PC-9 (cell line): ENCODE measurements at regions of chr13 and their contacts with region 1.

Region 1: DNA sequence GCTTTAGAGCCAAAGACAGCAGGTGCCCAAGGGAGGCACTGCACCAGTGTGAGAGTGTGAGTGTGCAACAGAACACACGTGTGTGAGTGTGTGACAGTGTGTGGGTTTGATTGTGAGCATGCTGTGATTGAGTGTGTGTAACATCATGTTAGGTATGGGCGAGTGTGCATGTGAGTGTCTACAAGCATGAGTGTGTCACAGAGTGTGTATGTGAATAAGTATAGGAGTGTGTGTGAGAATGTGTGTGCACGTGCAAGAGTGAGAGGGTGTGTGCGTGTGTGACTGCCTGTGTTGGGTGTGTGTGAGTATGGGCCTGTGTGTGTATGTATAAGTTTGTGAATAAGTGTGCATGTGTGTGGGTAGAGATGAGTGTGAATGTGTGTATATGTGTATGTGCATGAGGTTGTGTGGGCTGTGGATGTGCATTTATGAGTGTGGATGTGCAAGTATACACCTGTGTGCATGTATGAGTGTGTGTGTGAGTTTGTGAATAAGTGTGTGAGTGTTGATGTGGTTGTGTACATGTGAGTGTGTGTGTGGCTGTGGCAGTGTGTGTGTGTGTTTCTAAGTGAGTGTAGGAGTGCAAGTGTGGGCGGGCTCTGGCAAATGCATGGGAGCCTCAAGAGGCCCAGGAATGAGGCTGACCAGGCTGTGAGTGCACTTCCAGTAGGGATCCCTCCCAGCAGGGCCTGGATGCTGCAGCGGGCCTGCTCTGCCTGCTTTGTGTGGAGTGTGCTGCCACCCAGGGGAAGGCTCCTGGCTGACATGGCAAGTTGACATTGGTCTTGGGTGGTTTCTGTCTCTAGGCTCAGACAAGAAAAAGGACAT is 198.4 kb downstream of the COL4A1 start:
- DNase-seq: peak; percentile 86 to 88
- H3K4me3 ChIP-seq: no peak overlapping the region
- H3K27ac ChIP-seq: peak overlapping the region; percentile 8; the same call in 1 of the 2 replicates
- H3K4me1 ChIP-seq: peaks cover 24% of the 10 kb centered on the region
- H3K27me3 ChIP-seq: no peaks in the 10 kb centered on the region
- CTCF ChIP-seq: peak; percentile 95

Region 2: DNA sequence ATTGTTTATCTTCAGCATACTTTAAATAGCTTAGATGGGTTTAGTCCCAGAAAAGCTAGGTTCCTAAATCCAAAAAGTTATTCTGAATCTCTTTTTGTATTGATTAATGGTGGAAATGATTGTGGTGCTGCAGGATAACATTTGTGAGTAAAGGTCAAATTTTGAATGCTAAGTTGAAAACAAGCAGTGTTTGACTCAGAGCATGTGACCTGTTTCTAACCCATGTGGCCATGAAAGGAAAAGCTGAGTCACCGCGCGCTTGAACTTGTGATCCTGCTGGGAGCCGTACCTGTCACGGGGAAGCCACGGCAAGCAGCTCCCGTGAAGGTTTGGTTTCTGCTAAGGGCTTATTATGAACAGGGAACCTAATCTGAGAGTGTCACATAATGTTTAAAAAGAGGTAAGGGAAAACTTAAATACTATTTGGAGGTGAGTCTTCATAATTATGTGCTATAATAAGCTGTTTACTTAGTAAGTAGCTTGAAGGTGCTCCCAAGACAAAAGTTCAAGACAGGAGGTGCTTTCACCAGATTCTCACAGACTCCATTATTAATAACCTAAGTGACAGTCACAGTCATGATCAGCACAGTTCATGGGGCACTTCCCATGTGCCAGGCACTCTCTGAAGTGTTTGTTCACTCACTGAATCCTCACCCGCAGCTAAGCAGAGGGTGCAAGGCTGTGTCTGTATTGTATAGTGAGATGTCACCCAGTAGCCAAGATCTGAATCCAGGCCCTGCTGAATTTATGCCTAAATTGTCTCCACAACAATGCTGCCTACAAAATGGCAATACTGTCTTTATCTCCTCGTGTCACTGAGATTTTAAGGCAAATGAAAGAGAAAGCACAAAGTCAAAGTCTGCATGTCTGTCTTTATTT is 1192.7 kb before region 1 on chr13:
- CTCF ChIA-PET with region 1: interaction called, 3 read pairs
- POLR2A ChIA-PET with region 1: no interaction called
- intact Hi-C with region 1: loop called (anchors 1 kb)
- DNase-seq: peak; percentile 81 to 96
- H3K4me3 ChIP-seq: peak overlapping the region; percentile 47
- H3K27ac ChIP-seq: peak overlapping the region; percentile 96
- H3K4me1 ChIP-seq: peaks cover 56% of the 10 kb centered on the region
- H3K27me3 ChIP-seq: no peaks in the 10 kb centered on the region
- CTCF ChIP-seq: no peak

Region 3: DNA sequence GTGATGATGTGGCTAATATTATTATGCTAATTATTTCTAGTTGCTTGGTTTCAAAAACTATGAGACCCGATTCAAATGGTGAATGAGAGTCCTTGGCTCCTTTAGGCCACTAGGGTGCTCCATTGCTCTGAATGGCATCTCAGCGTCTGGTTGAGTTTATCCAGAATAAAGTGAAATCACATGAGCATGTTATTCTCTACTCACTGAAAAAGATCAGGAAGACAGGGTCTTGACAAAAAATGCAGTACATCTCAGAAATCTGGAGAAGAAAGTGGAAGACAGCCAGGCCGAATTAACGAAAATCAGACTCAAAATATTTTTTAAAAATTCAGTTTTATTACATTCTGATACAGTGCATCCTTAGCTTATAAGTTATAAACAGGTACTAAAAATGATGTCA is 962.9 kb before region 1 on chr13:
- CTCF ChIA-PET with region 1: no interaction called
- POLR2A ChIA-PET with region 1: no interaction called
- intact Hi-C with region 1: loop called (anchors 1 kb)
- DNase-seq: peak; percentile 37 to 64
- H3K4me3 ChIP-seq: no peak overlapping the region
- H3K27ac ChIP-seq: no peak overlapping the region
- H3K4me1 ChIP-seq: peaks cover 8% of the 10 kb centered on the region; the same call in 1 of the 2 replicates
- H3K27me3 ChIP-seq: no peaks in the 10 kb centered on the region
- CTCF ChIP-seq: peak; percentile 87

Region 4: DNA sequence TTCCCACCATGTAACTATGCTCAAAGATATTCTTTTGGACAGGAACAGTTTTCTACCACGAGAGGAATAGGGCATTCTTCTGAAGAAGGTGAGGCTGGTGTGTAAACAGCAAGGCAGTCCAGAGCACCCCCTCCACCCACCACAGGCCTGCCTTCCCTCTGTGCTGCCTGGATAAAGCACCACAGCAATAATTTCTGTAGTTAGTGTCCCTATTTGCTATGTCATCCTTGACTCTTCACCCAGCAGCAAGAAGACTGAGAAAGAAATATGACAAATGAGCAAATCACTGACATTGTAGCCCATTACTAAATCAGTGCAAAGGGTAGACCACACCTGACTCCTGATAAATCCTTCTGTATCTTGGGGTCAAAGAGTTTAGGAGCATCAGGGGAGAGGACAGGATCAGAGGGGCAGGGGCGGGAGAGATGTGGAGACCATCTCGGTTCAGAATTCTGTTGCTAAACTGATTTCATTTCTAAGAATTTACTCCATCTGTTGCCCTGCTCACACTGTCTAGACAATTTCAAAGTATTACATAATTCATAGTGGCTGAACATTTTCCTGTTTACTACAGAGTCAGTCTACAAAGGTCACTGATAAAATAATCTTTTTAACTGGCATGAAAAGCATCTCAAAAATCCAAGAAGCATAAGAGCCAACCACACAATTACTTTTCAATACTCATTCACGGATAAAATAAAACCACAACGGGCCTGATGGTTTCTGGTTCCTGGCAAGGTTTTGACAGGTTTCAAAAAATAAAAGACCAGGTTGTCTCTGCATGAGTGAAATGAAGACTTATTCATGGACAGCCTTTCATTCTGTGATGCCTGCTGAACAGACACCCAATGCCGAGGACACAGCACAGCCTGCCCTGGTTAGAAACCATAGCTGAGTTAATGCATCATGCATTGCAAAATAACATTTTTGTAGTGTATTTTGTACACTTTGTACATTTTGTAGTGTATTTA is 233.8 kb before region 1 on chr13:
- CTCF ChIA-PET with region 1: no interaction called
- POLR2A ChIA-PET with region 1: no interaction called
- intact Hi-C with region 1: loop called (anchors 1 kb)
- DNase-seq: peak; percentile 32 to 90
- H3K4me3 ChIP-seq: peak overlapping the region; percentile 4; the same call in 1 of the 2 replicates
- H3K27ac ChIP-seq: peak overlapping the region; percentile 84
- H3K4me1 ChIP-seq: peaks cover 76% of the 10 kb centered on the region
- H3K27me3 ChIP-seq: no peaks in the 10 kb centered on the region
- CTCF ChIP-seq: no peak

Region 5: GRCh38 chr13:110126391-110126961 is 17.9 kb after region 1 on chr13:
- CTCF ChIA-PET with region 1: interaction called, 17 read pairs
- POLR2A ChIA-PET with region 1: no interaction called
- intact Hi-C with region 1: no loop called
- DNase-seq: peak; percentile 81 to 99
- H3K4me3 ChIP-seq: peak overlapping the region; percentile 33; the same call in 1 of the 2 replicates
- H3K27ac ChIP-seq: peak overlapping the region; percentile 94
- H3K4me1 ChIP-seq: peaks cover 42% of the 10 kb centered on the region
- H3K27me3 ChIP-seq: no peaks in the 10 kb centered on the region
- CTCF ChIP-seq: no peak

Region 6: GRCh38 chr13:110209950-110210603 is 101.5 kb after region 1 on chr13:
- CTCF ChIA-PET with region 1: no interaction called
- POLR2A ChIA-PET with region 1: no interaction called
- intact Hi-C with region 1: no loop called
- DNase-seq: peak; percentile 78 to 81
- H3K4me3 ChIP-seq: no peak overlapping the region
- H3K27ac ChIP-seq: peak overlapping the region; percentile 72
- H3K4me1 ChIP-seq: peaks cover 18% of the 10 kb centered on the region
- H3K27me3 ChIP-seq: no peaks in the 10 kb centered on the region
- CTCF ChIP-seq: no peak

Region 7: GRCh38 chr13:110308015-110308929 is 199.7 kb after region 1 on chr13:
- CTCF ChIA-PET with region 1: no interaction called
- POLR2A ChIA-PET with region 1: no interaction called
- intact Hi-C with region 1: no loop called
- DNase-seq: peak in 1 of 2 experiments; percentile 17
- H3K4me3 ChIP-seq: no peak overlapping the region
- H3K27ac ChIP-seq: no peak overlapping the region
- H3K4me1 ChIP-seq: peaks cover 40% of the 10 kb centered on the region
- H3K27me3 ChIP-seq: no peaks in the 10 kb centered on the region
- CTCF ChIP-seq: no peak

Region 8: DNA sequence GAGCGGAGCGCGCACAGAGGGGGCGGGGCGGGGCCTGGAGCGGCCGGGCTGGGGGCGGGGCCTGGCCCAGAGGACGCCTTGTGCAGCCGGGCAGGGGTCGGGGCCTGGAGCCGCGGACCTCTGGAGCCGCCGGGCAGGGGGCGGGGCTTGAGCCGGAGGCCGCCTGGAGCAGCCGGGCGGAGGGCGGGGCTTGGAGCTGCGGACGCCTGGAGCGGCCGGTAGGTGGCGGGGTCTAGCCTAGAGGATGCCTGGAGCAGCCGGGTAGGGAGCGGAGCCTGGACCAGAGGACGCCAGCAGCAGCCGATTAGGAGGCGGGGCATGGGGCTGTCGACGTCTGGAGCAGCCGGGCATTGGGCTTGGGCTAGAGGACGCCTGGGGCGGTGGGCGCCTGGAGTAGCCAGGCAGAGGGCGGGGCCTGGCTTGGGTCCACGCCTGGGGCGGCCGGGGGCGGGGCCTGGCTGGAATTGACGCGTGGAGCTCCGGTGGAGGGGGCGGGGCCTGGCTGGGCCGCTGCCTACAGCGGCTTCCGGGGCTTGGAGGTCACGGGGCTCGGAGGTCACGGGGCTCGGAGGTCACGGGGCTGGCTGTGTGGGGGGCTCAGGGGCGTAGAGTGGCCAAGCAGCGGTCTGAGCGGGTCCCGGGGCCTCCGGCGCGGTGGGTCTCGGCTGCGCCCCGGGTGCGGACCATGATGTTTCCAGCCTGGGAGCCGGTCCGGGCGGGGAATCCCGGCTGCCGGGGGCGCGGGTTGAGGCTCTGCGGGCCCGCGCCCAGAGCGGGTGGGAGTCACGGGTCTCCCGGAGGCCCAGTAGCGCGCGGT is 806.7 kb after region 1 on chr13 and contains the start of gene ANKRD10:
- CTCF ChIA-PET with region 1: no interaction called
- POLR2A ChIA-PET with region 1: interaction called, 14 read pairs
- intact Hi-C with region 1: no loop called
- DNase-seq: peak; percentile 98 to 100
- H3K4me3 ChIP-seq: peak within 1 kb of the TSS; percentile 82
- H3K27ac ChIP-seq: peak within 1 kb of the TSS; percentile 89
- H3K4me1 ChIP-seq: peaks cover 34% of the 10 kb centered on the region
- H3K27me3 ChIP-seq: no peaks in the 10 kb centered on the region
- CTCF ChIP-seq: peak; percentile 81
- total RNA-seq, gene ANKRD10: 154 and 155 TPM in 2 replicates